B cell (primary cell): ENCODE measurements at regions of chr14 and their contacts with region 1.

Region 1: GRCh38 chr14:23095196-23096108 is at the start of gene C14orf119:
- DNase-seq: peak; percentile 100
- ATAC-seq: peak; percentile 86
- H3K4me3 ChIP-seq: peak within 1 kb of the TSS; percentile 76 to 99 (median 94)
- H3K4me3 Mint-ChIP-seq: no peak within 1 kb of the TSS
- H3K27ac ChIP-seq: peak within 1 kb of the TSS; percentile 92 to 97
- H3K27ac Mint-ChIP-seq: no peak within 1 kb of the TSS
- H3K4me1 ChIP-seq: peaks cover 20 to 24% of the 10 kb centered on the region in 2 donors
- H3K4me1 Mint-ChIP-seq: peaks cover 34% of the 10 kb centered on the region
- H3K27me3 ChIP-seq: no peaks in the 10 kb centered on the region
- H3K27me3 Mint-ChIP-seq: no peaks in the 10 kb centered on the region
- CTCF ChIP-seq: no peak
- total RNA-seq, gene C14orf119: 30.6 and 38.5 TPM in 2 replicates

Region 2: DNA sequence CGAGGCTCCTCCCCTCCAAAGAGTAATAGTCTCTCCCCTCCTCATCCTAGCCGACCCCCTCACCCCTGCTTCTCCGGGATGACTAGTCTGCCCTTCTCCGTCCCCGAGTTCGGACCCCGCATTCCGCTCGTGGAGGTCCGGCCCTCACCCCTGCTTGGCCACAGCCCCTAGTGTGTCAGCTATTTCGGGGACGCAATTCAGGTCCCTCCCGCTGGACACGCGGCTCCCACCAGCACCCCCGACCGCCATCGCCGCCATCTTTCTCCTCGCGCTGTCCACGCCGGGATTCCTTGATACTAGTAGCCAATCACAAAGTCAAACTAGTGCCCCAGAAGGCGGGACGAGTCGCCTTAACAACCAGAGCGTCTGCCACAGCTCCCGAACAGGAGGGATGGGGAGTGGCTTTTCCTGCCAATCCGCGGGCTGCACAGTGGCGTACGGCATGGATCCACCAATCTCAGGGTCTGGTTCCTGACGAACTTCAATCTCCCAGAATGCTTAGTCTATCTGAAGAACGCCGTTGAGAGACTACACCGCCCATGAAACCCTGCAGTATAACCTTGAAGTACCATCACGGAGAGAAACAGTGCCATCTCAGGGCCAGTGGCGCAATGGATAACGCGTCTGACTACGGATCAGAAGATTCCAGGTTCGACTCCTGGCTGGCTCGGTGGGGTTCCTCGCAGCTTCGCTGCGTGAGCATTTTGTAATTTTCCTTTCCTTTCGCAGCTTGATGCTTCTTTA is 166.2 kb before region 1 on chr14 and contains the start of gene PRMT5:
- CTCF ChIA-PET with region 1: interaction called, 3 read pairs
- POLR2A ChIA-PET with region 1: no interaction called
- intact Hi-C with region 1: loop called (anchors 1 kb)
- DNase-seq: peak; percentile 100
- ATAC-seq: peak; percentile 94
- H3K4me3 ChIP-seq: peak within 1 kb of the TSS; percentile 64 to 100 (median 96)
- H3K4me3 Mint-ChIP-seq: no peak within 1 kb of the TSS
- H3K27ac ChIP-seq: peak within 1 kb of the TSS; percentile 65 to 86
- H3K27ac Mint-ChIP-seq: no peak within 1 kb of the TSS
- H3K4me1 ChIP-seq: peaks cover 13 to 23% of the 10 kb centered on the region in 2 donors
- H3K4me1 Mint-ChIP-seq: peaks cover 26% of the 10 kb centered on the region
- H3K27me3 ChIP-seq: no peaks in the 10 kb centered on the region
- H3K27me3 Mint-ChIP-seq: no peaks in the 10 kb centered on the region
- CTCF ChIP-seq: no peak
- total RNA-seq, gene PRMT5: 38.8 and 48.6 TPM in 2 replicates

Region 3: GRCh38 chr14:23057757-23058653 is 37.4 kb before region 1 on chr14:
- CTCF ChIA-PET with region 1: interaction called, 16 read pairs
- POLR2A ChIA-PET with region 1: interaction called, 3 read pairs
- intact Hi-C with region 1: loop called (anchors 5 kb)
- DNase-seq: peak; percentile 89
- ATAC-seq: peak; percentile 64
- H3K4me3 ChIP-seq: peak overlapping the region; percentile 11 to 91 (median 68)
- H3K4me3 Mint-ChIP-seq: peak overlapping the region; percentile 95
- H3K27ac ChIP-seq: no peak overlapping the region
- H3K27ac Mint-ChIP-seq: peak overlapping the region; percentile 76
- H3K4me1 ChIP-seq: peaks cover 10 to 21% of the 10 kb centered on the region in 2 donors
- H3K4me1 Mint-ChIP-seq: peaks cover 18% of the 10 kb centered on the region
- H3K27me3 ChIP-seq: peaks cover 0 to 6% (median 0%) of the 10 kb centered on the region in 4 experiments
- H3K27me3 Mint-ChIP-seq: no peaks in the 10 kb centered on the region
- CTCF ChIP-seq: peak; percentile 95

Region 4: GRCh38 chr14:23120541-23121251 is 25.2 kb after region 1 on chr14:
- CTCF ChIA-PET with region 1: interaction called, 30 read pairs
- POLR2A ChIA-PET with region 1: interaction called, 5 read pairs
- intact Hi-C with region 1: loop called (anchors 1 kb)
- DNase-seq: peak; percentile 89
- ATAC-seq: peak; percentile 95
- H3K4me3 ChIP-seq: peak overlapping the region in 4 of 5 experiments; percentile 27 to 36 (median 30)
- H3K4me3 Mint-ChIP-seq: peak overlapping the region; percentile 79
- H3K27ac ChIP-seq: peak overlapping the region; percentile 72 to 88
- H3K27ac Mint-ChIP-seq: peak overlapping the region; percentile 89
- H3K4me1 ChIP-seq: peaks cover 32 to 35% of the 10 kb centered on the region in 2 donors
- H3K4me1 Mint-ChIP-seq: peaks cover 34% of the 10 kb centered on the region
- H3K27me3 ChIP-seq: no peaks in the 10 kb centered on the region
- H3K27me3 Mint-ChIP-seq: peaks cover 7% of the 10 kb centered on the region
- CTCF ChIP-seq: peak; percentile 99

Region 5: DNA sequence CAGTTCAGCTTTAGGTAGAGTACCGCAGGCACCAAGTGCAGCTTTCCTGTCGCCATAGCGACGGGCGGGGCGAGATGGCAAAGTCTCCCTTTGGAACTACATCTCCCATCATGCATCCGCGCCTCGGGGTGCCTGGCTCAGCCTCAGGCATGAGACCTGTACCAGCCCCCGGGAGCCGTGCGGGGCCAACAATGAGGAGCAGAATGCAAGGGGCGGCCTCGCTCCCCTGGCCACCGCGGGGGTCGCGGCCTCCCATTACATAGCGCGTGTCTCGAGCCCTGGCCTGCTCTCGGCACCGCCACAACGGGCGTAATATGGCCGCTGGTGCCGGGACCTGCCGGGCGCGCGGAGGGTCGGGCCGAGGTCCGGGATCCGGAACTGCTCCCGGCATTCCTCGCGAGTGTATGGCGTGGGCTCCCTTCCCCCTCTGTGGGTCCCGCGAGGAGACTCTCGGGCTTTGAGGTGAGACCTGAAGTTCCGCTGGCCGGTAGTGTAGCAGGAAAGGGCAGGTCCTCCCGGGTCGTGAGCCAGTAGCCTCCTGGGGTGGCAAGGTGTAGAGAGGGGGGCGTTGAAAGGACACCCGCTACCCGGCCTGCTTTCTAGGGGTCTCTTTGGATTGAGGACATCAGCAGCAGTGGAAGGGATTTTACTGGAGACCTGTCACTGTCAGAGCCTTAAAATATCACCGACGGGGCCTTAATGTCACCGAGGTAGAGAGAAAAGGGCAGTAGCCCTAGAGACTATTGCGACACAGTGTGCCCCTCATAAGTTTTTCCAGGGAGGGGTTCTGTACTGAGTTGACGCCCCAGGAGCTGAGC is 460.6 kb after region 1 on chr14 and contains the start of gene THTPA:
- CTCF ChIA-PET with region 1: no interaction called
- POLR2A ChIA-PET with region 1: no interaction called
- intact Hi-C with region 1: loop called (anchors 10 kb)
- DNase-seq: peak; percentile 96
- ATAC-seq: peak; percentile 78
- H3K4me3 ChIP-seq: peak within 1 kb of the TSS; percentile 17 to 97 (median 81)
- H3K4me3 Mint-ChIP-seq: peak within 1 kb of the TSS; percentile 98
- H3K27ac ChIP-seq: peak within 1 kb of the TSS; percentile 69 to 84
- H3K27ac Mint-ChIP-seq: peak within 1 kb of the TSS; percentile 99
- H3K4me1 ChIP-seq: peaks cover 19 to 36% of the 10 kb centered on the region in 2 donors
- H3K4me1 Mint-ChIP-seq: peaks cover 45% of the 10 kb centered on the region
- H3K27me3 ChIP-seq: no peaks in the 10 kb centered on the region
- H3K27me3 Mint-ChIP-seq: no peaks in the 10 kb centered on the region
- CTCF ChIP-seq: no peak
- total RNA-seq, gene THTPA: 21.4 and 21.5 TPM in 2 replicates